HepG2 (cell line): ENCODE measurements at regions of chr14 and their contacts with region 1.

Region 1: GRCh38 chr14:69153131-69153872 is 383 bp upstream of the DCAF5 start:
- DNase-seq: peak; percentile 85
- ATAC-seq: peak; percentile 84
- H3K4me3 ChIP-seq: peak overlapping the region; percentile 95 to 99 (median 96)
- H3K27ac ChIP-seq: peak overlapping the region; percentile 90
- H3K4me1 ChIP-seq: peaks cover 51% of the 10 kb centered on the region
- H3K27me3 ChIP-seq: no peaks in the 10 kb centered on the region; a peak in 1 of 5 replicates
- CTCF ChIP-seq: peak; percentile 22; the same call in 1 of the 2 replicates
- EP300 ChIP-seq: peak in 1 of 2 experiments; percentile 22; a peak in 1 of 4 replicates
- POLR2A ChIP-seq: peak in 1 of 2 experiments; percentile 80; a peak in 3 of 4 replicates
- RAD21 ChIP-seq: peak; percentile 57

Region 2: DNA sequence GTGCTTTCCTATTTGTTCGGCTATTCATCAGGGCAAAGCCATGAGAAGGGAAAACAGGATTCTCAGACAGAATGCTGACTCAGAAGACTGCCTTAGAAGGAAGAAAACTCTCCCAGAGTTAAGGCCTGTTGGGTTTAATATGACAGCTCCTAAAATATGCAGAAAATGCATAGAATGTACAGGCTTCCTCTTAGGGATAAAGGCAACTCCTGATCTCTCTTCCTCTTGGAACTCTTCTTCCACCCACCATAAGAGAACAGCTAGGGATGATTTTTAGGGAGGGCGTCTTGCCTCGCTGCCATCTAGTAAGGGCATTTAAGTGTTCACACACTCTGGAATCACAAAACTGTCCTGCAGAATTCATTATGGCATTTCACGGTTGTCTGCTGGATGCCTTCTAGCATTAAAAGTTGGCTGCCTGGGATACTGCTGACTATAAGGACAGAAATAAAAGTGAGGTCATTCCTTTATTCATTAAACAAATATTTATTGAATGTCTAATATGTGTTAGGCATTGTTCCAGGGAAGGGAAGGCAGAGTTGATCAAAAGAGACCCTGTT is 74.0 kb before region 1 on chr14:
- CTCF ChIA-PET with region 1: no interaction called
- POLR2A ChIA-PET with region 1: no interaction called
- in situ Hi-C with region 1: no loop called
- intact Hi-C with region 1: no loop called
- DNase-seq: no peak
- ATAC-seq: no peak
- H3K4me3 ChIP-seq: no peak overlapping the region
- H3K27ac ChIP-seq: no peak overlapping the region
- H3K4me1 ChIP-seq: peaks cover 21% of the 10 kb centered on the region
- H3K27me3 ChIP-seq: no peaks in the 10 kb centered on the region
- CTCF ChIP-seq: no peak
- EP300 ChIP-seq: no peak
- POLR2A ChIP-seq: no peak
- RAD21 ChIP-seq: no peak

Region 3: GRCh38 chr14:69191340-69192111 is 38.2 kb after region 1 on chr14 and contains the start of gene EXD2:
- CTCF ChIA-PET with region 1: no interaction called
- POLR2A ChIA-PET with region 1: interaction called, 12 read pairs
- in situ Hi-C with region 1: no loop called
- intact Hi-C with region 1: loop called (anchors 2 kb)
- DNase-seq: peak; percentile 87
- ATAC-seq: peak; percentile 99
- H3K4me3 ChIP-seq: peak within 1 kb of the TSS; percentile 75 to 92 (median 81)
- H3K27ac ChIP-seq: peak within 1 kb of the TSS; percentile 66
- H3K4me1 ChIP-seq: peaks cover 21% of the 10 kb centered on the region
- H3K27me3 ChIP-seq: no peaks in the 10 kb centered on the region
- CTCF ChIP-seq: peak; percentile 36
- EP300 ChIP-seq: peak in 1 of 2 experiments; percentile 26; a peak in 2 of 4 replicates
- POLR2A ChIP-seq: peak; percentile 68 to 83
- RAD21 ChIP-seq: peak; percentile 39; the same call in 1 of the 2 replicates
- total RNA-seq, gene EXD2: 8.8 and 15.1 TPM in 2 replicates